ENCODE measurements at regions of chr11 and their contacts with region 1.

Region 1: GRCh38 chr11:45834298-45834756 is 12.9 kb upstream of the CRY2 start:
- DNase-seq: peak; percentile 76
- ATAC-seq: peak; percentile 96
- H3K4me3 Mint-ChIP-seq: peak overlapping the region; percentile 76
- H3K27ac Mint-ChIP-seq: peak overlapping the region; percentile 92
- H3K4me1 Mint-ChIP-seq: peaks cover 36% of the 10 kb centered on the region
- H3K27me3 Mint-ChIP-seq: peaks cover 15% of the 10 kb centered on the region

Region 2: GRCh38 chr11:45804761-45805304 is 29.5 kb before region 1 on chr11 and contains the start of gene SLC35C1:
- CTCF ChIA-PET with region 1: interaction called, 10 read pairs
- DNase-seq: peak; percentile 98
- ATAC-seq: peak; percentile 94
- H3K4me3 Mint-ChIP-seq: peak within 1 kb of the TSS; percentile 88
- H3K27ac Mint-ChIP-seq: peak within 1 kb of the TSS; percentile 93
- H3K4me1 Mint-ChIP-seq: peaks cover 42% of the 10 kb centered on the region
- H3K27me3 Mint-ChIP-seq: no peaks in the 10 kb centered on the region
- total RNA-seq, gene SLC35C1: 15.2 to 15.7 TPM

Measured in activated CD8-positive, alpha-beta memory T cell treated with anti-CD3 and anti-CD28 coated beads, Interleukin-2, amount 10 ng/mL, durations not matched to agents 7 days and 5 days (primary cell).